ENCODE measurements at regions of chr3 and their contacts with region 1.

Region 1: GRCh38 chr3:182349051-182349450 is 444.3 kb upstream of the ATP11B start:
- DNase-seq: peak; percentile 70
- H3K4me3 ChIP-seq: peak overlapping the region; percentile 47
- H3K27ac ChIP-seq: peak overlapping the region; percentile 94
- H3K4me1 ChIP-seq: peaks cover 66% of the 10 kb centered on the region
- CTCF ChIP-seq: no peak

Region 2: DNA sequence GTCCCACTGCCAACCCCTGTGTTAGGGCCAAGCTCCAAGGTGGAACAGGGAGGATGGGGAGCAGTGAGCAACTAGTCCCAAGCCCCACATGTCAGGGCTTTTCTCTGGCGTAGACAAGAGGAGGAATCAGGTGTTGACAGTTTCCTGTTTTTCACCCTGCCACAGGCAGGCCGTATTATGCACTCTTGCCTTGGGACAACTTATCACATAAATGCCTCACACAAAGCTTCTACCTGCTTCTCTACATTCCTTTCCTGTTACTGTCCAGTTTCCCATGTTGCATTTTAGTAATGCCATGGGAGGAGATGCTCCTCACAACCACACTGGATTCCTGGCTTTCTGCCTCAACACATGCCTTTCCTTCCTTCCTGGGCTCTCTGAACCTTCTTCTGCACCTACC is 63.0 kb after region 1 on chr3:
- CTCF ChIA-PET with region 1: no interaction called
- POLR2A ChIA-PET with region 1: interaction called, 7 read pairs
- intact Hi-C with region 1: loop called (anchors 1 kb)
- DNase-seq: peak; percentile 55
- H3K4me3 ChIP-seq: peak overlapping the region; percentile 68
- H3K27ac ChIP-seq: peak overlapping the region; percentile 96
- H3K4me1 ChIP-seq: peaks cover 95% of the 10 kb centered on the region
- CTCF ChIP-seq: no peak

Region 3: GRCh38 chr3:182521339-182521738 is 172.3 kb after region 1 on chr3:
- CTCF ChIA-PET with region 1: no interaction called
- POLR2A ChIA-PET with region 1: no interaction called
- intact Hi-C with region 1: no loop called
- DNase-seq: peak; percentile 41
- H3K4me3 ChIP-seq: no peak overlapping the region
- H3K27ac ChIP-seq: no peak overlapping the region
- H3K4me1 ChIP-seq: peaks cover 34% of the 10 kb centered on the region
- CTCF ChIP-seq: no peak

Region 4: DNA sequence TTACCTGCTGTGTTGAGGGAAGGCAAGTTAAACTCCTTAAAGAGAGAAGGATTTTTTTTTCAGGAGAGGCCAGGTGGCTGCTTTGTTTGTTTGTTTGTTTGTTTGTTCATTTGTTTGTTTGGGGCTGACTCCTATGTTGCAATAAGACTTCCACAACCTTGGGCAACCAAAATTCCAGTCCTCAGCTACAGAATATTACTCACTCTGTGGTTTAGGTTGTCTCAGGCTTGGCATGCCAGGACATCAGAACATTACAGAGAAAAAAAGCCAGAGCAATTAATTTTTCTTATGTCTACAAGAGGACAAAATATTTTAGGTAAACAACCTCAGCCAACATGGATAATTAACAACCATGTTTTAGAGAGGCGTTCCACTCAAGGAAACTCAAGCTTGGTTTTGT is 287.6 kb after region 1 on chr3:
- CTCF ChIA-PET with region 1: no interaction called
- POLR2A ChIA-PET with region 1: no interaction called
- intact Hi-C with region 1: no loop called
- DNase-seq: no peak
- H3K4me3 ChIP-seq: no peak overlapping the region
- H3K27ac ChIP-seq: no peak overlapping the region
- H3K4me1 ChIP-seq: no peaks in the 10 kb centered on the region
- CTCF ChIP-seq: no peak

Region 5: DNA sequence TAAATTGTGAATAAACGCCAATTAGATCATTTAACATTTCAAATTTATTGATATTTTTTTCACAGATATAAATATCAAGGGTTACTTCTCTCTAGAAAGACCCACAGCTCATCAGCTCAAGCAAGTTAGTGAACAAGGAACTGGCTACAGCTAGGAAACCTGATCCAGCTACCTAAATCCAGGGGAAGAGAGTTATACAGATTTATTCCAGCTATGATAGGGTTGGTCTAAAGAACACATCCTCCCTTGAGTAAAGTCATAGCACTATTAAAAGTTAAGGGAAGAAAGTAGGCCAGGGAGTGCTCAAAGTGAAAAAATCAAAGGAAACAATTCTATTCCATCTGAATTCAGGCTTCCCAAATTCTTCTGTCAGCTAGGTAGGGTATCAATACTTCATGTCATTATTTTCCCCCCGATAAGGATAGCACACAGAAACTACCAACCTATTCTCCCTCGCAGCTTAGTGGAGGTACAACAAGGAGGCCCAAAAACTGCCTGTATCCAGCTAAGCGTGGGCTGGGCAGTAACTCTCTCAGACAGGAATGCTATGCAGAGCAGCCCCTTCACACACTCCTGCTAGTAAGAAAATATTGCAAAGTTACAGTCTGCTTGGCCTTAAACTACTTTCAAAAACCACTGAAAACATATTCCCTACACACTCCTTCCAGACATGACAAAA is 587.3 kb after region 1 on chr3:
- CTCF ChIA-PET with region 1: no interaction called
- POLR2A ChIA-PET with region 1: no interaction called
- intact Hi-C with region 1: no loop called
- DNase-seq: no peak
- H3K4me3 ChIP-seq: no peak overlapping the region
- H3K27ac ChIP-seq: no peak overlapping the region
- H3K4me1 ChIP-seq: peaks cover 14% of the 10 kb centered on the region
- CTCF ChIP-seq: no peak